Psoas muscle (tissue), 8 donors: ENCODE measurements at regions of chr15 and their contacts with region 1.

Region 1: DNA sequence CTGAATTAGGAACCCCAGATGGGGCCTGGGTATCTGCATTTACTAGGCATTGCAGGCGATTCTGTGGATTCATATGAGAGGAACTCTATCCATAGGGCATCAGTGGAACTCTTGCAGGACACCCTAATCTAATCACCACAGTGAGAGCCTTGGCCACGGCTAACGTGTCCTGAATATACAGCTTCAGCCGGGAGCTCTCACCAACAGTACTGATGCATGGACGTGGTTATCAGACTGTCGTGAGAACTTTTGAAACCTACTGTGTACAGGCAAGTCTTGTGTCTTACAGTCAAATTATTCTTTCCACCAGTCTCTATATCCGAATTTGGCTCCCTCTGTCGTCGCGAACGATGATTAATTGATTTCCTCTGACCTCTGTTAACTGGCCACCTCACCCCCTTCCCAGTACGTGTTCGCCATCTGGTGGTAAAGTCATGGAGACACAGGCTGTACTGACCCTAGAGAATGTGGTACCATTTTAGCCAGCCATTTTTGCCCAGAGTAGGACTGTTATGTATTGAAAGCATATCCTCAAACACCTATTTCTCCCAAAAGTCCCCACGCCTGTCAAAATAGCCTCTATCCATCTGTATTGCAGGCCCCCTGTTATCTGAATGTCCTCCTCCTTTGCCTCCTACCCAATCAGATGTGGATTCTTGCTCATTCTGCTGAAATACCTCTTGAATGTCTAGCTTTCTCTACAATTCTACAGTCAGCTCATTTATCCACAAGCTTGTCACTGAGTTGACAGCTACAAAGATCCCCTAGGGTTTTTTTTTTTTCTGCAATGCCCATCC is 39.7 kb downstream of the GLDN start:
- DNase-seq: peak in 1 of 2 donors; percentile 58
- ATAC-seq: peak; percentile 73 to 96 (median 91)
- H3K4me3 ChIP-seq: no peak overlapping the region
- H3K27ac ChIP-seq: no peak overlapping the region
- H3K4me1 ChIP-seq: no peaks in the 10 kb centered on the region
- H3K27me3 ChIP-seq: no peaks in the 10 kb centered on the region
- CTCF ChIP-seq: peak; percentile 78

Region 2: DNA sequence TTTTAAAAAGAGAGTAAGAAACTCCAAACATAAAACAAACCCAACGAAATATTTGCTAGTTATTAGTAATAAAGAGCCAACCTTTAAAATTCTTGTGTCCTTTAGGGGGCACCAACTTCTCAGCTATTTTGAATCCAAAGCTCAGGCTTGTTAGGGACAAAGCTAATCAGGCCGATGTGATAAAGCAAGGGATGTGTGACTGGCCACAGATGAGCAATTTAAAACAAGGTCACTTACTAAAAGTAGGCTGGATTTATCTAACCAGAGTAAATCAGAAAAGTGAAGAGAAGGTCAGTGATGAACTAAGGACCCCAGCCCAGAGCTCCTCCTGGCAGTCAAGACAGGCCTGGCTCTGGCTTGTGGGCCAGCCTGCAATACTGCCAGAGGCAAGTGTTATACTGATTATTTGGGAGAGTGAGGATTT is 151.3 kb before region 1 on chr15:
- intact Hi-C with region 1: loop called in 1 of 2 experiments (anchors 5 kb)
- DNase-seq: no peak
- ATAC-seq: no peak
- H3K4me3 ChIP-seq: no peak overlapping the region
- H3K27ac ChIP-seq: no peak overlapping the region
- H3K4me1 ChIP-seq: peaks cover 3% of the 10 kb centered on the region
- H3K27me3 ChIP-seq: peaks cover 0 to under 1% (median 0%) of the 10 kb centered on the region in 3 donors
- CTCF ChIP-seq: no peak

Region 3: DNA sequence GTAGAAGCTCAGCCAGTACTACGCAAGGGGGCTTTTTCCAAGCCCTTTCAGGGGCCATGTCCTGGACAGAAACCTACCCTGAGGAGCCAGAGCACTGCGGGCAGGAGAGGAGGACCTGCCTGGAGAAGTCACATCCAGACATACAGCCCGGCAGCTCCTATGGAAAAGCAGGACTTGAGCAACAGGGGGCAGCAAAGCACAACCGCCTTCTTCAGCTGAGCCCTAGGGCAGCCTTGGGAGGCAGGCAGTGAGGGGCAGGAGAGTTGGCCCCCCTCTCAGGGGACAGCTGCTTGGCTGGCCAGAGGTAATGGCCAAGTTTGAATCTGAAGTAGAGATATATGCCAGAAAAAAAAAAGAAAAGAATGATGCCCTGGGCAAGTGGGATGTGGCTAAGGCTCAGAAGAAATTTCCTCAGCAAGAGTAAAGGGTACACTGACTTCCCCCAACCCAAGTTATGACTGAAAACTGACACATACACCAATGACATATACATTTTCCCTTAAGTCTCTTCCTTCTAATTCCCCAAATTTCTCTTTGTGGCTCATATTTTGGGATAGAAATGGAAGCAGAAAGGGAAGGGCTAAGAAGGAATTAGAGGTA is 99.7 kb before region 1 on chr15:
- intact Hi-C with region 1: loop called (anchors 1 to 2 kb)
- DNase-seq: peak; percentile 54 to 72
- ATAC-seq: peak in 3 of 4 donors; percentile 68 to 78 (median 73)
- H3K4me3 ChIP-seq: no peak overlapping the region
- H3K27ac ChIP-seq: no peak overlapping the region
- H3K4me1 ChIP-seq: no peaks in the 10 kb centered on the region
- H3K27me3 ChIP-seq: peaks cover 0 to 5% (median 1%) of the 10 kb centered on the region in 3 donors
- CTCF ChIP-seq: peak; percentile 43